Vagina (tissue), 2 donors: ENCODE measurements at regions of chr1 and their contacts with region 1.

Region 1: DNA sequence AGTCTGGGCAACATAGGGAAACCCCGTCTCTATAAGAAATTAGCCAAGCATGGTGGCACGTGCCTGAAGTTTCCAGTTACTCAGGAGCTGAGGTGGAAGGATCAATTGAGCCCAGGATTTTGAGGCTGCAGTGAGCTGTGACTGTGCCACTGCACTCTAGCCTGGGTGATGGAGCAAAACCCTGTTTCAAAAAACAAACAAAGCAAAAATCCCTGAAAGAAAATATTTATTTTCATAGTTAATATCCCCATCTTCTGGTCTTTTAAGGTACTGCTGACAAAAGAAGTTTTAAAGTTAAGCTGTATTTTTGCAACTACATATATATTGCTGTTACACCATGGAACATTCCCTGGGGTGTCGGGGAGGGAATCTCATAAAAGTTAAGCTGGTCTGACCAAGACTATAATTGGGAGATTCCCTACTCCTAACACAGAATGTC is 26.0 kb downstream of the VAMP4 start:
- DNase-seq: no peak
- H3K4me3 ChIP-seq: no peak overlapping the region
- H3K27ac ChIP-seq: peak overlapping the region; percentile 45
- H3K4me1 ChIP-seq: peaks cover 7% of the 10 kb centered on the region
- H3K27me3 ChIP-seq: no peaks in the 10 kb centered on the region
- CTCF ChIP-seq: peak in 2 of 3 experiments; percentile 20 to 62
- POLR2A ChIP-seq: no peak

Region 2: DNA sequence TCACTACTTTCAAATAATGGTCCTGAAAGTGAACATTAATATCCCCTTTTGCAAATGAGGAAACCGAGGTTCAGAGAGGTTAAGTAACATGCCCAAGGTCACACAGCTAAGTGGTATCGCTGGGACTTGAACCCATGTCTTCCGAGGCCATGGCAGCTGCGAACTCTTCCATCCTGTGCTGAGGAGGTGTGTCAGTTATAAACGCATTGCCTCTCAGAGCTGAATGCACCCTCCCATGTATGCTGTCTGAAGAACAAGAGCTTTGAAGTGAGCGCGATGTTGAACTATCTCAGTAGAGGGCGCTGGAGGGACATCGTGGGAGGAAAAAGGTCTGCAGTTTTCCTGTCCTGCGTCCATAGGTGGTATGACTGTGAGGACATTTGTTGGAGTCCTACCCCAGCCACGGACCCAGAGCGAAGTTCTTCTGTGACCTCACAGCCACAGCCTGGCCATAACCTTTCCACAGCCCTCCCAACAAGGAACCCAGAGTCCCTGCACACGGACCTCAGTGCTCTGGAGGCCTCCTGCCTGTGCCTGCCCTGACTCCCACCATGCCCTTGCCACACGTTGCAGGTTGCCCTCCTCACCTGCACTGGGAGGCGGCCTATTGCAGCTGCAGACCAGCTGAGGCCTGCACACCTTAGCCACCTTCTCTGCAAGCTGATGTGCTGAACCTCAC is 70.9 kb before region 1 on chr1:
- intact Hi-C with region 1: loop called (anchors 10 kb)
- DNase-seq: no peak
- H3K4me3 ChIP-seq: no peak overlapping the region
- H3K27ac ChIP-seq: peak overlapping the region; percentile 81
- H3K4me1 ChIP-seq: peaks cover 20% of the 10 kb centered on the region
- H3K27me3 ChIP-seq: no peaks in the 10 kb centered on the region
- CTCF ChIP-seq: peak; percentile 46 to 81 (median 59)
- POLR2A ChIP-seq: no peak